Activated B cell treated with CpG ODN at 0.5 μM for 24 hours (primary cell): ENCODE measurements at regions of chr22 and their contacts with region 1.

Region 1: DNA sequence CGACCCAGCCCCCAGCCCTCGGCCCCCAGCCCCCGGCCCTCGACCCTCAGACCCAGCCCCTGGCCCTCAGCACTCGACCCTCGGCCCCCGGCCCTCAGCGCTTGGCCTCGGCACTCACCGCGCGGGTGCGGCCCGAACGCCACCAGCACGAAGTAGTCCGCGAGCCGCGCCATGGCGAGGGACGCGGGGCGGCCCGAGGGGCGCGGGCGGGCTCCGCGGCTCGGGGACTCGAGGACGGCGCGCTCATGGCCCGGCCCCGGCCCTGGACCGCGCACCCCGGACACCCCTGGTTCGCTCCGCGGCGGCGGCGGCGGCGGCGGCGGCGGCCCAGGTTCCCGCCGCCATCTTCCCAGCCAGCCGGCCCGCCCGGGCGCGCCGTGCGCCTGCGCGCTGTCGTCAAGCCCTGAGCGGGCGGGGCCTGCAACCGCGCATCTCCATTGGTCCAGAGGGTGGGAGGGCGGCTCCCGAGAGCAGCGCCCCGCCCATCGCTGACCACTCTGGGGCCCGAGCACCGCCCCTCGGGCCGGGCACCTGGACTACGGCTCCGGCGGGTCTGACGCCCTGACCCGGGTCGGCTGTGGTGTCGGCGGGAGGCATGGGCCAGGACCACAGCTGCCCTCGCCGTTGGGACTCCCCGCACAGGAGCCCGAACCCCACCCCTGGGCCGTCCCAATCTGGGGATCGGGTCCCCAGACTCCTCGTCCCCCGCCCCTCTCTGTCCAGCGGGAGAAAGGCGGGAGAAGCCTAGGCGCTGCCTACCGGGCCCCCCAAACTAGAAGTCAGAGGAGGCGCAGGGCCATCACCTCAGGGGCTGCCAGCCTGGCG is at the start of gene SBF1:
- DNase-seq: peak; percentile 89
- ATAC-seq: peak; percentile 79
- H3K4me3 Mint-ChIP-seq: peak within 1 kb of the TSS; percentile 88
- H3K27ac Mint-ChIP-seq: peak within 1 kb of the TSS; percentile 78
- H3K4me1 Mint-ChIP-seq: peaks cover 49% of the 10 kb centered on the region
- H3K27me3 Mint-ChIP-seq: no peaks in the 10 kb centered on the region
- CTCF ChIP-seq: no peak
- total RNA-seq, gene SBF1: 114 and 144 TPM in 2 replicates

Region 2: DNA sequence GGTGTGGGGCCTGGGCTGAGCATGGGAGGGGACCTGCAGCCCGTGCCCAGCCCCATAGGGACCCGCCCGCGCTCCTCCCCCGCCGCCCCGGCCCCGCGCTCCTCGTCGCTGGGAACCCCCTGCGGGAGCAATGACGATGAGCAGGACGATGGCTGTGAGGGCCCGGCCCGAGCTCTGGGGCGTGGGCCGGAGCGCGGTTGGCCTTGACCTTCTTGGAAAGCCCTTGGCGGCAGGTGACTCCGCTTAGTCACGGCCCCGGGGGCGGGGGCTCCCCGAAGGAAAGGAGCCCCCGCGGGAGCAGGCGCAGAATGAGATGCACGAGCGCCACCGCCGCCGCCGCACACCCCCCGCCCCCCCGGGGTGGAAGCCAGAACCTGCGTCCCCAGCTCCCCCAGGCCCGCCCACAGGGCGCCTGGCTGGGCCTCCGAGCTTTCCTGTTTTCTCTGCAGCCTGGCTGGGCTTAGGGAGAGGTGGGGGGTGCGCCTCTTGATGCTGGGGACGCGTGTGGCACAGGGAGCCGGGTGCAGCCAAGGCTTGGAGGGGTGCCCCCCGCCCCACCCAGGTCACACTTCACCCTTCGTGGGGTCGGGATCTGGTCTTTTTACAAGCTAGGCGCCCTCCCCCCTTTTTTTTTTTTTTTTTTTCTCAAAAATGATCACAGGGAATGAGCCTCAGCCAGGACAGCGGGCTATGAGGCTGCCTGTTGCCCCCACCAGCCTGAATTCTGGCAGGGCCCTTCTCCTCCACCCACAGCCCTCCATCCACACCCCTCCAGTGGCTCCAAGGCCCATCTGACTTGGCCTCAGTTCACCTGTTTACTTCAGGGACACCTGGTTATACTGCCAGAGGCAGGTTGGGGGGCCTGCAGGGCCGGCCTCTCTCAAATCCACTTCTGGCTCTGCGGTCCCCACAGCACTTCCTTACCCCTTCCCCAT is 538.6 kb before region 1 on chr22:
- CTCF ChIA-PET with region 1: no interaction called
- POLR2A ChIA-PET with region 1: no interaction called
- intact Hi-C with region 1: loop called (anchors 10 kb)
- DNase-seq: peak; percentile 92
- ATAC-seq: peak; percentile 75
- H3K4me3 Mint-ChIP-seq: peak overlapping the region; percentile 61
- H3K27ac Mint-ChIP-seq: peak overlapping the region; percentile 82
- H3K4me1 Mint-ChIP-seq: peaks cover 42% of the 10 kb centered on the region
- H3K27me3 Mint-ChIP-seq: no peaks in the 10 kb centered on the region
- CTCF ChIP-seq: no peak

Region 3: DNA sequence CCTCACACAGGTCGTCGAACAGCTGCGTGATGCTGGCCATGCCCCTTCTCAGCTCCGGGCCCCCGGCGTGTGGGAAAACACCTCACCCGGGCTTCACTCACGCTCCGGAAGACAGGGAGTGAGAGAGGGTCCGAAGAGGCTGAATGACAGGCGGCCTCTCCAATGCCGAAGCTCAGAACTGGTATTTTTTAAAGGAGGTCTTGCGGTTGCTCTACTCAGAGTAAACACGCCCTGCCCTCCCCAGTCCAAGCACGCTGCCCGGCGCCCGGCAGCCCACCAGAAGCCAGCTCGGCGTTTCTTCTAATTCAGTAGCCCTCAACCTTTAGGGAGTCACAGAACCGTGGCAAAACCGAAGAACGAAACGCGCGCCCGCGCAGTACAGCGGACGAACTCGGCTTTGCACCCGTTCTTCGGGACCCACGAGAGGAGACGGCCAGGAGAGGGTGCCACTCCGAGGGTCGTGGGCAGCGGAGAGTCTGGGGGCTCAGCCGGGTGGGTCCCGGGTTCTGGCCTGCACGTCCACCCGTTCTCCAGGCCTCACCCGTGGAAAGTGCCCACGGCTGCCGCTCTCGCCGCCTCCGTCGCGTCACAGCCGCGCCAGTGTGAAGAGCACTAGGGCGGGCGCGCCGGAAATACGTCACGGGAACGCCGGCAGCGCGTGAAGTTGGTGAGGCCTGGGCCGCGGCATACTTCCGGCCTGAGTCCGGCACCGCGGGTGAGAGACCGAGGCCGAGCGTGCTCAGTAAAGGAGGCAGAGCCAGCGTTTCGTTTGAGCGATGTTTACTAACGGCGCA is 230.3 kb before region 1 on chr22 and contains the start of gene TUBGCP6:
- CTCF ChIA-PET with region 1: no interaction called
- POLR2A ChIA-PET with region 1: interaction called, 4 read pairs
- intact Hi-C with region 1: loop called (anchors 10 kb)
- DNase-seq: peak; percentile 96
- ATAC-seq: peak; percentile 76
- H3K4me3 Mint-ChIP-seq: peak within 1 kb of the TSS; percentile 100
- H3K27ac Mint-ChIP-seq: peak within 1 kb of the TSS; percentile 100
- H3K4me1 Mint-ChIP-seq: peaks cover 52% of the 10 kb centered on the region
- H3K27me3 Mint-ChIP-seq: no peaks in the 10 kb centered on the region
- CTCF ChIP-seq: no peak
- total RNA-seq, gene TUBGCP6: 87.5 and 103 TPM in 2 replicates

Region 4: DNA sequence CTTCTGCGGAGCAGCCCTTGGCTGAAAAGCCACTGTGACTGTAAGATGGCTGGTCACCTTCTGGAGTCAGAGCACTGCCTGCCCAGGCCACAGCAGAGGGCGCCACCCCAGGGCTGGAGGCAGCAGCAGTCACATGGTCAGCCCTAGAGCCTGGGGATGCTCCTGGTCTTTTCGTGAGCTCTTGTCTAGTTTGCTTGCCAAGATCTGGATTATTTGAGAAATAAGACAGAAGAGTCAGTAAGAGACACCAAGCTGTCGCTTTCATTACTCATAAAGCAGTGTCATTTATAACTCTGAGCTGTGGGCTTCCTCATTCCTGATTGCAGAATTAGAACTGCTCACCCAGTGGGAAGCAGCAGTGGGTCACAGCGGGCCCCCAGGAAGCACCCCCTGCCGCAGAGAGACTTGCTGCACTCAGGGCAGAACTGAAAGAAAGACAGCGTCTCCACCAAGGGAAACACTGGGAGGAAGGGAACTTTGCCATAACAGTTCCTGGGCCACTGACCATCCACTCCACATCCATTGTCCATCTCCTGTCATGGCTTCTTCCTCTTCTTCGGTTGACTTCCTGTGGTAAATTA is 75.0 kb before region 1 on chr22:
- CTCF ChIA-PET with region 1: no interaction called
- POLR2A ChIA-PET with region 1: interaction called, 4 read pairs
- intact Hi-C with region 1: loop called (anchors 5 kb)
- DNase-seq: no peak
- ATAC-seq: peak; percentile 69
- H3K4me3 Mint-ChIP-seq: peak overlapping the region; percentile 35
- H3K27ac Mint-ChIP-seq: peak overlapping the region; percentile 64
- H3K4me1 Mint-ChIP-seq: peaks cover 49% of the 10 kb centered on the region
- H3K27me3 Mint-ChIP-seq: no peaks in the 10 kb centered on the region
- CTCF ChIP-seq: no peak

Region 5: GRCh38 chr22:50525390-50526068 is 50.6 kb after region 1 on chr22 and contains the start of gene SCO2:
- CTCF ChIA-PET with region 1: interaction called, 5 read pairs
- POLR2A ChIA-PET with region 1: interaction called, 37 read pairs
- intact Hi-C with region 1: loop called (anchors 1 kb)
- DNase-seq: peak; percentile 97
- ATAC-seq: peak; percentile 52
- H3K4me3 Mint-ChIP-seq: peak within 1 kb of the TSS; percentile 84
- H3K27ac Mint-ChIP-seq: peak within 1 kb of the TSS; percentile 90
- H3K4me1 Mint-ChIP-seq: peaks cover 33% of the 10 kb centered on the region
- H3K27me3 Mint-ChIP-seq: no peaks in the 10 kb centered on the region
- CTCF ChIP-seq: no peak
- total RNA-seq, gene SCO2: 7.1 and 11.6 TPM in 2 replicates

Region 6: GRCh38 chr22:50530877-50531545 is 56.1 kb after region 1 on chr22:
- CTCF ChIA-PET with region 1: interaction called, 5 read pairs
- POLR2A ChIA-PET with region 1: interaction called, 37 read pairs
- intact Hi-C with region 1: loop called (anchors 2 kb)
- DNase-seq: peak; percentile 86
- ATAC-seq: peak; percentile 53
- H3K4me3 Mint-ChIP-seq: peak overlapping the region; percentile 92
- H3K27ac Mint-ChIP-seq: peak overlapping the region; percentile 99
- H3K4me1 Mint-ChIP-seq: peaks cover 55% of the 10 kb centered on the region
- H3K27me3 Mint-ChIP-seq: no peaks in the 10 kb centered on the region
- CTCF ChIP-seq: no peak

Region 7: GRCh38 chr22:50544078-50544745 is 69.3 kb after region 1 on chr22:
- CTCF ChIA-PET with region 1: no interaction called
- POLR2A ChIA-PET with region 1: interaction called, 9 read pairs
- intact Hi-C with region 1: loop called (anchors 5 kb)
- DNase-seq: peak; percentile 80
- ATAC-seq: peak; percentile 38
- H3K4me3 Mint-ChIP-seq: peak overlapping the region; percentile 60
- H3K27ac Mint-ChIP-seq: peak overlapping the region; percentile 82
- H3K4me1 Mint-ChIP-seq: peaks cover 56% of the 10 kb centered on the region
- H3K27me3 Mint-ChIP-seq: no peaks in the 10 kb centered on the region
- CTCF ChIP-seq: no peak